ENCODE measurements at regions of chr1 and their contacts with region 1.

Region 1: DNA sequence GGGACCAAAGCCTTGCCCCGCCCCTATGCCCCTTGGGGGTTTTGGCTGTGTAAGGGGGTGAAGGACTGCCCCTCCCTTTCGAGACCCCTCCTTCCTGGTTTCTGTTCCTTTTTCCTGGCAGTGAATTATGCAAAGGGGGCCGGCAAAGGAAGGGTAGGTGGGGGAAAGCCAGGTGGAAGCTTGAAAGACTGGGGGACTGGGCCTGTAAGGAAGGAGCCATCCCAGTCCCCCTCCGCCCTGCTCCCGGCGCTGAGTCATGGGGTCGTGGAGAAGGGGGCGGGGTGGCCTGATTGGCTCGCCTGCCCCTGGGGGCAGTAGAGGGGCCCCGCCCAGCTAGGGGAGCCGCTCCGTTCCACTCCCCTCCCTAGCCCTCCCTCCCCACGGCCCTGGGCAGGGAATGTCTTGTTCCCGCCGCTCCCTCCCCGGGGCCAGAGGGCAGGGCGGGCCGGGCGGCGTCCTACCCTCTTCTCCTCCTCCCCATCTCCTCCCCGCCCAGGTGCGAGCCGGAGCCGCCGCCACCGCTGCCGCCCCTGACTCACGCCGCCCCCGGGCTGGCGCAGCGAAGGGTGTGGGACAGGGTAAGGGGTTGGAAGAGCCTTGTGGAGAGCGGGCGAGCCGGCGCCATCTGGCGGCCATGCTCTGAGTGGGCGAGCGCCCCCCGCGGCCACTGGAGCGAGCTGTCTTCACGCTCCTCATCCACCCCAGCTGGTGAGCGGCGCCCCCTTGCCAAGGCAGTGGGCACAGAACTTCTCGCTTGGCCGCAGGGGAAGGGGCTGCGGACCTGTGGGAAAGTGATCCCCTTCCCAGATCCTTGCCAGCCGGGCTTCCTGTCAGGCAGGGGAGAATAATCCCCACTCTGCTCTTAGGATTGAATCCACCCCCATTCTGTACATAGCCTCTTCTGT is 14.7 kb downstream of the ZBTB7B start:
- DNase-seq: peak; percentile 93
- H3K4me3 ChIP-seq: peak overlapping the region; percentile 20 to 51; a peak in 2 of 4 replicates
- H3K27ac ChIP-seq: no peak overlapping the region
- H3K4me1 ChIP-seq: peaks cover 0 to 6% of the 10 kb centered on the region in 2 experiments; a peak in 1 of 4 replicates
- H3K27me3 ChIP-seq: no peaks in the 10 kb centered on the region
- CTCF ChIP-seq: peak; percentile 86
- EP300 ChIP-seq: no peak
- RAD21 ChIP-seq: peak; percentile 67

Region 2: DNA sequence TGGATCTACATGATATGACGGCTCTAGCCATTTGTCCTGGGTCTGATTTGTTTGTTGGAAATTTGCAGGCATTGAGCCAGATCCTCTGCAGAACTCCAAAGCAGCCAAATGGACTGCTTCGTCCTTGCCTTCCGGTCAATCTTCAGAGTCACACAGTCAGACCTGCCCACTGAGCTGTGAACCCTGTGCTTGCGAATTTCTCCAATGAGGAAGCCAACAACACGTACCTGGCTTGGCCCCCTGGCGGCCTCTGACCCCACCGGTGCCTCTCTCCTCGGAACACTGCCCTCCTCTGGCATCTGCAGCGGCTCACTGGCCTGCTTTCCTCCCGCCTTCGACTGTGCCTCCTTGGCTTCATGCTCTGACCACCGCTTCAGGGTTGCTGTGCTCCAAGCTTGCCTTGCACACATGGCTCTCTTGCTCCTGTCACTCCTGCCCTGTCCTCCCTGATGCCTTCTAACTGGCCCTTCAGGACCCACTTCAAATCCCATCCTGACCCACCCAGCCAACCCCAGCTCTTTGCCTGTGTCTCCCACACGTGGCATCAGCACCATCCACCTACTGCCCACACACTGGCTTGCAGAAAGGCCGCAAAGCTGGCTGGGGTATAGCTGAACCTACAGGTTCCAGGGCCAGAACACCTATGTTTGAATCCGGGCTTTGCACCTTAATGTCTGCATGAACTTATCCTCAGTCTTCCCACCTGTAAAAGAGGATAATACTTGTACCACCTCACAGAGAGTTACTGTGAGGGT is 275.4 kb before region 1 on chr1:
- CTCF ChIA-PET with region 1: no interaction called
- POLR2A ChIA-PET with region 1: no interaction called
- DNase-seq: no peak
- H3K4me3 ChIP-seq: no peak overlapping the region
- H3K27ac ChIP-seq: no peak overlapping the region
- H3K4me1 ChIP-seq: peaks cover 0 to 4% of the 10 kb centered on the region in 2 experiments; a peak in 2 of 4 replicates
- H3K27me3 ChIP-seq: peaks cover 15% of the 10 kb centered on the region
- CTCF ChIP-seq: no peak
- EP300 ChIP-seq: no peak
- RAD21 ChIP-seq: no peak

Region 3: GRCh38 chr1:154961497-154962262 is 55.6 kb before region 1 on chr1 and contains the start of gene PYGO2:
- CTCF ChIA-PET with region 1: interaction called, 27 read pairs
- POLR2A ChIA-PET with region 1: interaction called, 3 read pairs
- DNase-seq: peak; percentile 93
- H3K4me3 ChIP-seq: peak within 1 kb of the TSS; percentile 72 to 73
- H3K27ac ChIP-seq: peak within 1 kb of the TSS; percentile 83 to 98
- H3K4me1 ChIP-seq: peaks cover 4 to 36% of the 10 kb centered on the region in 2 experiments; a peak in 3 of 4 replicates
- H3K27me3 ChIP-seq: no peaks in the 10 kb centered on the region
- CTCF ChIP-seq: peak; percentile 69
- EP300 ChIP-seq: 0 out of 4 replicates have a peak, but pooled peaks of 1 of the 2 experiments have one; percentile 26
- RAD21 ChIP-seq: peak; percentile 46
- polyA plus RNA-seq, gene PYGO2: 23.3 and 28.2 TPM in 2 replicates

Region 4: DNA sequence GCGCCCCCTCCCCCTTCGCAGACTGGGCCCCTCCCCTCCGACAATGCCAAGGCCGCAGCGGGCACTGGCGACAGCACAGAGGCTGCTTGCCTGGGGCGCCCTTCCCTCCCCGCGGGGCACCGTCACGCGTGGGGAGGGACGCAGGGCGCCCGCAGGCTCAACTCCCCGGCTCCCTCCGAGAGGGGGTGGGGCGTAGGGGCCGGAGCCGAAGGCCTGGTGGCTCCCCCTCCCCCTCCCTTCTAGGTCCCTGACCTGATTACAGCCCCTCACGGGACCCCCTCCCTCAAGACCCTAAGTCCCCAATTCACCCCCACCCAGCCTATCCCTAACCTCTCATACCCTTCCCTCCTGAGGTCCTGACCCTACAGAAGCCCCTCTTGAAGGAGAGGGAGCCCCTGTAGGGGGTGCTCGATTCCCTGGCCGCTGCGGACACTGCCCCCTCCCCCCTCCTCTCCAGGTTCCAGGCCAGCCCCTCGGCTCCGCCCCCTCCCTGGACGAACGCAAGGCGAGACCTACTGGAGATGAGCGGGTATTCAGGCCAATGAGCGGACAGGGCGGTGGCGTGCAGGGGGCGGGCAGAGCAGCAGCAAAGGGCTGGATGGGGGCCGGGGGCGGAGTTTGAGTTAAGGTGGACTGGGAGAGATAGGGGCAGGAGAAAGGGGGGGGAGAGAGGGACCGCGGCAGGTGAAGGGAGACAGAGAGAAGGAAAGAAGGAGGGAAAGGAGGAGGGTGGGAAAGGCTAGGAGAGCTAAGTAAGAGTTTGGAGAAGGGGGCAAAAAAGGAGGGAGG is 15.4 kb before region 1 on chr1:
- CTCF ChIA-PET with region 1: interaction called, 149 read pairs
- POLR2A ChIA-PET with region 1: interaction called, 4 read pairs
- DNase-seq: peak; percentile 96
- H3K4me3 ChIP-seq: peak overlapping the region; percentile 57 to 71
- H3K27ac ChIP-seq: peak overlapping the region; percentile 92 to 96
- H3K4me1 ChIP-seq: peaks cover 19 to 33% of the 10 kb centered on the region in 2 experiments
- H3K27me3 ChIP-seq: no peaks in the 10 kb centered on the region
- CTCF ChIP-seq: peak; percentile 69
- EP300 ChIP-seq: no peak
- RAD21 ChIP-seq: no peak

Region 5: GRCh38 chr1:155038602-155039307 is 21.5 kb after region 1 on chr1:
- CTCF ChIA-PET with region 1: interaction called, 71 read pairs
- POLR2A ChIA-PET with region 1: no interaction called
- DNase-seq: no peak
- H3K4me3 ChIP-seq: no peak overlapping the region
- H3K27ac ChIP-seq: no peak overlapping the region
- H3K4me1 ChIP-seq: no peaks in the 10 kb centered on the region
- H3K27me3 ChIP-seq: no peaks in the 10 kb centered on the region
- CTCF ChIP-seq: no peak
- EP300 ChIP-seq: no peak
- RAD21 ChIP-seq: no peak

Region 6: GRCh38 chr1:155050560-155051341 is 33.5 kb after region 1 on chr1 and contains the start of gene ADAM15:
- CTCF ChIA-PET with region 1: interaction called, 71 read pairs
- POLR2A ChIA-PET with region 1: no interaction called
- DNase-seq: peak; percentile 99
- H3K4me3 ChIP-seq: peak within 1 kb of the TSS; percentile 84 to 98
- H3K27ac ChIP-seq: peak within 1 kb of the TSS; percentile 61 to 92
- H3K4me1 ChIP-seq: peaks cover 7 to 42% of the 10 kb centered on the region in 2 experiments
- H3K27me3 ChIP-seq: no peaks in the 10 kb centered on the region
- CTCF ChIP-seq: peak; percentile 88
- EP300 ChIP-seq: no peak
- RAD21 ChIP-seq: peak; percentile 40
- polyA plus RNA-seq, gene ADAM15: 60.1 and 64.1 TPM in 2 replicates

Region 7: DNA sequence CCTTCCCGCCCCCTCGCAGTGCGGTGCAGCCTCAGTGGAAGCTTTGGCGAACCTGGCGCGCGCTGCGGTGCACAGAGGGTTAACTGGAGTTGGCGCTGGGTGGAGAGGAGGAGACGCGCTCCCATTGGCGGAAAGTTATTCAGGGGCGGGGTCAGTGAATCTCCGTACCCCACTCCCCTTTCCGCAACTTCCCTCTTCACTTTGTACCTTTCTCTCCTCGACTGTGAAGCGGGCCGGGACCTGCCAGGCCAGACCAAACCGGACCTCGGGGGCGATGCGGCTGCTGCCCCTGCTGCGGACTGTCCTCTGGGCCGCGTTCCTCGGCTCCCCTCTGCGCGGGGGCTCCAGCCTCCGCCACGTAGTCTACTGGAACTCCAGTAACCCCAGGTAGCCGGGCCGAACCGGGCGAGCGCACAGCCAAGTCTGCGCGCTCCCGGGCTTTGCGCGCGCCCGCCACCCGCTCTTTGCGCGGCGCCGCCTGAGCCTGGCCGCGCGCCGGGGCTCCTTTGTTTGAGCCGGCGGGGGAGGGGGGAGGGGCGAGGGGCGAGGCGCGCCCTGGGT is 46.3 kb after region 1 on chr1 and contains the start of gene EFNA4:
- CTCF ChIA-PET with region 1: interaction called, 17 read pairs
- POLR2A ChIA-PET with region 1: no interaction called
- DNase-seq: peak; percentile 95
- H3K4me3 ChIP-seq: peak within 1 kb of the TSS; percentile 79 to 92
- H3K27ac ChIP-seq: peak within 1 kb of the TSS; percentile 83 to 85
- H3K4me1 ChIP-seq: peaks cover 0 to 25% of the 10 kb centered on the region in 2 experiments; a peak in 2 of 4 replicates
- H3K27me3 ChIP-seq: no peaks in the 10 kb centered on the region
- CTCF ChIP-seq: no peak
- EP300 ChIP-seq: no peak
- RAD21 ChIP-seq: no peak
- polyA plus RNA-seq, gene EFNA4: 15.9 and 17.7 TPM in 2 replicates